Psoas muscle (tissue), 8 donors: ENCODE measurements at regions of chr10 and their contacts with region 1.

Region 1: DNA sequence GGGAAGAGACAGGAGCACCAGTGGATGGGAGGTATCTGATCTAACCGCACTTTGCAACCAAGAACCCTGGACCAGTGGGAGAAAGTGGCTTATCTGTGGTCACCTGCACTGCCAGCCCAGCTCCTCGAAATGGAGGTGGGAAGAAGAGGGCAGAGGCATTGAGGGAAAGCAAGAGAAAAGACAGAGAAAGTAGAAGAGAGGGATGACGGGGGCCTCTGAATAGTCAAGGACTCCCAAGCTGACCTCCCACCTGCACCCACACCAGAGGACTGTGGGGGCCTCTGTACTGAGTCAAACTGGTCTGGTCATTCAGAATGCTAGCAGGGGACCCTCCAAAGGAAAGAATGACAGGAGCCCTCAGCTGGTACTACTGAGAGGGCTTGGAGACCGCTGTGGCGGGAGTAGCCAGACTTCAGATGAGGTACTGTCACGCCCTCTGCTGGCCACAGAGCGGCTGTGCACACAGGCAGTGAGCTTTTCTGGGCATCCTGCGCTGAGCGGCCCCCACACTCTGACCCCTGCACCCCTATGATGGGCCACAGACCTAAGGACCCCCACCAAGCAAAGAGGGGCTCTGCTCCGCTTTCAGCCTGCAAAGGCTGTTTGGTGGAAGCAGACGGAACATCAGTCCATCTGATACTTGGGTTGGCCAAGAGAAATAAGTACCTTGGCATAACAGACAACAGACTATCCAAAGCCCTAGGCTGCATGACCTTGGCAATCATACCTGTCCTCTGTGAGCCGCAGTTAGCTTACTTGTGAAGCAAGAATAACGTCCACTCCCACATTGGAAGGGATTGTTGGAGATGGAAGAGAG is 112.9 kb downstream of the COL13A1 start:
- DNase-seq: peak; percentile 70 to 87
- ATAC-seq: peak; percentile 84 to 89 (median 88)
- H3K4me3 ChIP-seq: no peak overlapping the region
- H3K27ac ChIP-seq: no peak overlapping the region
- H3K4me1 ChIP-seq: peaks cover 18% of the 10 kb centered on the region
- H3K27me3 ChIP-seq: peaks cover 0 to 2% (median 0%) of the 10 kb centered on the region in 3 donors
- CTCF ChIP-seq: peak; percentile 93

Region 2: DNA sequence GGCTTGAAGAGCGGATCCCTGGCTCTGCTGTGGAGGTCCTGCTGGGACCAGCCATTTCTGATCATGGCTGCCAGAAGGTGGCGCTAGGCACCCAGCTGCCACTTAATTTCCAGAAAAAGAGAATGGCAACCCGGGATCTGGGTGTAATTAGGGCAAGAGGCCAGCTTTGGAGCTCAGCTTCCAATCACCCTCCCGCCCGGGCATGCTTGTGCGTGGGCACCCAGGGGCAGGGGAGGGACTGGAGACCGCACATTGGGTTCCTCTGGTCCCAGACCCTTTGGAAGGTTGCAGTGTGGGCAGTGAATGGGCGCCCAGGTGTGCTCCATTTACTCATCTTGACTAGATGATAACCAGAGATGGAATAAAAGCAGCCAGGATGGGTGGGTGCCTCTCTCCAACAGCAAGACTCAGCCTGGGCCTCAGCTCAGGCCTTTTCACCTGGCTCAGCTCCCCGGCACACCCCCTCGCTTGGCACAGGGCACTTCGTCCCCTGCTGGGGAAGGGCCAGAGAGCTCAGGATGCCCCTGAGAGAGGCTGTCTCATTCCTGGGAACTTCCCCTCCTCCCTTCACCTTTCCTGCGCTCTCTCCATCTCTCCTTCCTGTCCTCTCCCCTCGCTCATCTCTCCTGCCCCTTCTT is 269.8 kb before region 1 on chr10:
- intact Hi-C with region 1: loop called (anchors 2 to 5 kb)
- DNase-seq: peak; percentile 42 to 71
- ATAC-seq: peak; percentile 65 to 86 (median 71)
- H3K4me3 ChIP-seq: no peak overlapping the region
- H3K27ac ChIP-seq: no peak overlapping the region
- H3K4me1 ChIP-seq: no peaks in the 10 kb centered on the region
- H3K27me3 ChIP-seq: peaks cover 0 to 1% (median 0%) of the 10 kb centered on the region in 3 donors
- CTCF ChIP-seq: peak; percentile 91

Region 3: GRCh38 chr10:69728335-69728870 is 186.2 kb before region 1 on chr10:
- intact Hi-C with region 1: no loop called
- DNase-seq: no peak
- ATAC-seq: peak; percentile 69 to 82 (median 76)
- H3K4me3 ChIP-seq: no peak overlapping the region
- H3K27ac ChIP-seq: peak overlapping the region; percentile 76
- H3K4me1 ChIP-seq: peaks cover 53% of the 10 kb centered on the region
- H3K27me3 ChIP-seq: no peaks in the 10 kb centered on the region
- CTCF ChIP-seq: no peak

Region 4: GRCh38 chr10:69742928-69743602 is 171.5 kb before region 1 on chr10:
- intact Hi-C with region 1: loop called in 1 of 2 experiments (anchors 5 kb)
- DNase-seq: peak in 1 of 2 donors; percentile 71
- ATAC-seq: peak in 3 of 4 donors; percentile 39 to 67 (median 57)
- H3K4me3 ChIP-seq: no peak overlapping the region
- H3K27ac ChIP-seq: no peak overlapping the region
- H3K4me1 ChIP-seq: peaks cover 1% of the 10 kb centered on the region
- H3K27me3 ChIP-seq: no peaks in the 10 kb centered on the region
- CTCF ChIP-seq: no peak

Region 5: GRCh38 chr10:69786791-69787190 is 127.8 kb before region 1 on chr10:
- intact Hi-C with region 1: loop called (anchors 2 to 10 kb)
- DNase-seq: no peak
- ATAC-seq: peak; percentile 53 to 77 (median 66)
- H3K4me3 ChIP-seq: no peak overlapping the region
- H3K27ac ChIP-seq: no peak overlapping the region
- H3K4me1 ChIP-seq: no peaks in the 10 kb centered on the region
- H3K27me3 ChIP-seq: no peaks in the 10 kb centered on the region
- CTCF ChIP-seq: peak; percentile 39

Region 6: GRCh38 chr10:69953851-69954250 is 39.2 kb after region 1 on chr10:
- intact Hi-C with region 1: no loop called
- DNase-seq: no peak
- ATAC-seq: no peak
- H3K4me3 ChIP-seq: no peak overlapping the region
- H3K27ac ChIP-seq: no peak overlapping the region
- H3K4me1 ChIP-seq: no peaks in the 10 kb centered on the region
- H3K27me3 ChIP-seq: no peaks in the 10 kb centered on the region
- CTCF ChIP-seq: no peak

Region 7: DNA sequence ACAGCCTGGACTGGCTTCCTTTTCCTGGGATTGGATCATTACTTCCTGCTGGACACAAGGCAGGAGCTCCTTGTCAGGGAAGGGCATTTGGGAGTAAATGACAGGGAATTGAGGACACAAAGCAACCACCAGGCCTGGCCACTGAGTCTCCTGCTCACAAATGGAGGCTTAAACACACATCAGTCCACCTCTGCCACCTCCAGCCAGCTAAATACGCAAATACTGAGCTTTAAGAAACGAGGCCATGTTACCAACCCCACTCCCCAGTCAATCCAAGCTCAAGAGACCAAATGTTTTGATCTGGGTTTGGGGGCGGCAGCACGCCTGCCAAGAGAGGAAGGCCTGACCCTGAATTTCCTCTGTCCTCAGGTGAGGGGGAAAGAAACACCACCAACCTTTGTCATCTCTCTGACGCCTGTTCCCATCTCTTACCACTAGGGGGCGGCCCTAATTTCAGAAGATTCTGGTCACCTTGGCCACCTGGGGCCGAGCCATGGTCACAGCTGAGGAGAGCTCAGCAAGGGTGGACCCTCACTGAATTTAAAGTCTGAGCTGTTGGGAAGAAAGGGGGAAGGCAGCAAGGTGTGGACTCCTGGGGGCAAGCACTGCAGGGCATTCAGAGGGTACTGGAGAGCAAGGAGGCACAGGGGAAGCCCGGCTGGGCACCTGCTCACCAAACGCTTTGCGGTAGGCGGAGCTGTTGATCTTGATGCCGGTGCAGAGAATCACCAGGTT is 201.5 kb after region 1 on chr10:
- intact Hi-C with region 1: no loop called
- DNase-seq: peak; percentile 38 to 67
- ATAC-seq: peak; percentile 66 to 81 (median 76)
- H3K4me3 ChIP-seq: no peak overlapping the region
- H3K27ac ChIP-seq: no peak overlapping the region
- H3K4me1 ChIP-seq: peaks cover 7% of the 10 kb centered on the region
- H3K27me3 ChIP-seq: no peaks in the 10 kb centered on the region
- CTCF ChIP-seq: peak; percentile 84